T-cell (primary cell): ENCODE measurements at regions of chr10 and their contacts with region 1.

Region 1: DNA sequence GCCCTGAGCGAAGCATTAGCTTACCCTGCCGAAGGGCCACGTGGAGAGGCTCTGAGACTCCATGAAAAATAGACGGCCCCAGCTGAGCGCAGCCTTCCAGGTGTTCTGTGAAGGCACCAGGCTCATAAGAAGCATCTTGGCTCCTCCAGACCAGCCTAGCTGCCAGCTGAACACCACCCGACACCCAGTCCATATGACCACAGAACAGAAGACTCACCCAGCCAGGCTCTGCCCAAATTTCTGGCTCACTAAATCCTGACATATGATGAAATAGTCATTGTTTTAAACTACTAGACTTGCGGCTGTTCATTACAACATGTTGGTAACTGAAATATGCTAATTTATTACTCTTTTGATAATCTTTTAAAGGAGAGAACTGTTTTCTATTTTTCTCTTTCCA is 99.5 kb upstream of the ABI1 start:
- DNase-seq: no peak
- ATAC-seq: no peak
- H3K4me3 ChIP-seq: no peak overlapping the region
- H3K4me3 Mint-ChIP-seq: no peak overlapping the region
- H3K27ac ChIP-seq: no peak overlapping the region
- H3K27ac Mint-ChIP-seq: no peak overlapping the region
- H3K4me1 ChIP-seq: no peaks in the 10 kb centered on the region
- H3K4me1 Mint-ChIP-seq: peaks cover 5 to 12% (median 7%) of the 10 kb centered on the region in 3 donors
- H3K27me3 ChIP-seq: no peaks in the 10 kb centered on the region
- H3K27me3 Mint-ChIP-seq: no peaks in the 10 kb centered on the region

Region 2: GRCh38 chr10:26903431-26904217 is 56.7 kb before region 1 on chr10:
- CTCF ChIA-PET with region 1: no interaction called
- POLR2A ChIA-PET with region 1: no interaction called
- DNase-seq: no peak
- ATAC-seq: no peak
- H3K4me3 ChIP-seq: no peak overlapping the region
- H3K4me3 Mint-ChIP-seq: no peak overlapping the region
- H3K27ac ChIP-seq: no peak overlapping the region
- H3K27ac Mint-ChIP-seq: no peak overlapping the region
- H3K4me1 ChIP-seq: no peaks in the 10 kb centered on the region
- H3K4me1 Mint-ChIP-seq: no peaks in the 10 kb centered on the region
- H3K27me3 ChIP-seq: peaks cover 0 to 2% of the 10 kb centered on the region in 2 experiments
- H3K27me3 Mint-ChIP-seq: peaks cover 2 to 4% of the 10 kb centered on the region in 2 donors

Region 3: DNA sequence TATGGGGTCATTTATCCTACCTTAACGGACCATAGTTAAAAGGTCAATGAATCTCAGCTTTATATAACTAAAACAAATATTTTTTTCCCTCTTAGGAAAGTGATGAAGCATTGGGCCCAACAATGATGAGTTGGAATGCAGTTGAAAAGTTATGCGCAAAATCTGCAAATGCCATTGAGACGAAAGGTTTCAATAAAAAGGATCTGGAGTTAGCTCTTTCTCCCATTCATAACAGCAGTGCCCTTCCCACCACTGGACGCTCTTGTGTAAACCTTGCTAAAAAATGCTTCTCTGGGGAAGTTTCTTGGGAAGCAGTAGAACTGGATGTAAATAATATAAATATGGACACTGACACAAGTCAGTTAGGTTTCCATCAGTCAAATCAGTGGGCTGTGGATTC is 209.5 kb after region 1 on chr10:
- CTCF ChIA-PET with region 1: no interaction called
- POLR2A ChIA-PET with region 1: interaction called in 1 of 2 experiments, 10 read pairs
- DNase-seq: no peak
- ATAC-seq: no peak
- H3K4me3 ChIP-seq: no peak overlapping the region
- H3K4me3 Mint-ChIP-seq: no peak overlapping the region
- H3K27ac ChIP-seq: no peak overlapping the region
- H3K27ac Mint-ChIP-seq: no peak overlapping the region
- H3K4me1 ChIP-seq: no peaks in the 10 kb centered on the region
- H3K4me1 Mint-ChIP-seq: no peaks in the 10 kb centered on the region
- H3K27me3 ChIP-seq: no peaks in the 10 kb centered on the region
- H3K27me3 Mint-ChIP-seq: no peaks in the 10 kb centered on the region

Region 4: GRCh38 chr10:28628184-28628893 is 1668.0 kb after region 1 on chr10:
- CTCF ChIA-PET with region 1: no interaction called
- POLR2A ChIA-PET with region 1: no interaction called
- DNase-seq: peak in 34 of 35 experiments; percentile 3 to 79 (median 50)
- ATAC-seq: peak; percentile 59 to 78 (median 74)
- H3K4me3 ChIP-seq: no peak overlapping the region
- H3K4me3 Mint-ChIP-seq: no peak overlapping the region
- H3K27ac ChIP-seq: no peak overlapping the region
- H3K27ac Mint-ChIP-seq: no peak overlapping the region
- H3K4me1 ChIP-seq: peaks cover 0 to 7% of the 10 kb centered on the region in 2 experiments
- H3K4me1 Mint-ChIP-seq: peaks cover 7 to 9% (median 8%) of the 10 kb centered on the region in 3 donors
- H3K27me3 ChIP-seq: peaks cover 0 to 24% of the 10 kb centered on the region in 2 experiments
- H3K27me3 Mint-ChIP-seq: peaks cover 26% of the 10 kb centered on the region in 2 donors